ENCODE measurements at regions of chr12 and their contacts with region 1.

Region 1: DNA sequence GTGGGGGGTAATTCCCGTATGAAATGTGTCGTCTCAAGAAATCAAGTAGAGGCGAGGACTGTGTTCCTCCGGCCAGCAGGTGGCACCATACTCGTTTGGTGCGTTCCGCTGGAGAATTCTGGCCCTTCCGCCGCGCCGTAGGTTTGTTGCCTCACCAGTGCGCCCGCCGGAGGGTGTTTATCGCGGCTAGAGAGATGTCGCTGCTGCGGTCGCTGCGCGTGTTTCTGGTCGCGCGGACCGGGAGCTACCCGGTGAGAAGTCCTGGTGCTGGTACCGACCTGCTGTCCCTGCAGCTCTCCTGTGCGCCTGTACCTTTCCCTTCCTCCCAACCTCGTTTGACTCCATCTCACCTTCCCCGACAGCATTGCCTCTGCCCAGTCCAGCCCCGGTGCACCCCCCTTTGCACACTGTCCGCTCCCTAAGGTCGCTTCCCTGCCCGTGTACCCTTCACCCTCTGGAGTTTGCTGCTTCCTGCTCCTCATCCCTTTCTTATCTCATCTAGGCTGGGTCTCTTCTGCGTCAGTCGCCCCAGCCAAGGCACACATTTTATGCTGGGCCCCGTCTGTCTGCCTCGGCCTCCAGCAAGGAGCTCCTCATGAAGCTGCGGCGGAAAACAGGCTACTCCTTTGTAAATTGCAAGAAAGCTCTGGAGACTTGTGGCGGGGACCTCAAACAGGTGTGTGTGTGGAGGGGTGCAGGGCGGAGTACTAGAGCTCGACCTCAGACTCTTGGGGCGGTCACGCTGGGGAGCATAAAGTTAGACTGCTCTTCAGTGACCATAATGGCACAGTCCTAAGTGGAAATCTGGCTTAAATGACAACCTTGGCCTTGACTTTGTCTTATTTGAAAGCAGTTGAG is at the start of gene TSFM:
- DNase-seq: peak; percentile 93 to 99 (median 98)
- ATAC-seq: peak; percentile 93
- H3K4me3 ChIP-seq: peak within 1 kb of the TSS; percentile 89
- H3K4me3 Mint-ChIP-seq: peak within 1 kb of the TSS; percentile 100
- H3K27ac ChIP-seq: peak within 1 kb of the TSS; percentile 51 to 78
- H3K27ac Mint-ChIP-seq: peak within 1 kb of the TSS; percentile 100
- H3K4me1 ChIP-seq: peaks cover 58% of the 10 kb centered on the region
- H3K4me1 Mint-ChIP-seq: peaks cover 47% of the 10 kb centered on the region
- H3K27me3 ChIP-seq: no peaks in the 10 kb centered on the region
- H3K27me3 Mint-ChIP-seq: no peaks in the 10 kb centered on the region
- CTCF ChIP-seq: peak; percentile 90
- total RNA-seq, gene TSFM: 25.8 to 26.9 TPM

Region 2: DNA sequence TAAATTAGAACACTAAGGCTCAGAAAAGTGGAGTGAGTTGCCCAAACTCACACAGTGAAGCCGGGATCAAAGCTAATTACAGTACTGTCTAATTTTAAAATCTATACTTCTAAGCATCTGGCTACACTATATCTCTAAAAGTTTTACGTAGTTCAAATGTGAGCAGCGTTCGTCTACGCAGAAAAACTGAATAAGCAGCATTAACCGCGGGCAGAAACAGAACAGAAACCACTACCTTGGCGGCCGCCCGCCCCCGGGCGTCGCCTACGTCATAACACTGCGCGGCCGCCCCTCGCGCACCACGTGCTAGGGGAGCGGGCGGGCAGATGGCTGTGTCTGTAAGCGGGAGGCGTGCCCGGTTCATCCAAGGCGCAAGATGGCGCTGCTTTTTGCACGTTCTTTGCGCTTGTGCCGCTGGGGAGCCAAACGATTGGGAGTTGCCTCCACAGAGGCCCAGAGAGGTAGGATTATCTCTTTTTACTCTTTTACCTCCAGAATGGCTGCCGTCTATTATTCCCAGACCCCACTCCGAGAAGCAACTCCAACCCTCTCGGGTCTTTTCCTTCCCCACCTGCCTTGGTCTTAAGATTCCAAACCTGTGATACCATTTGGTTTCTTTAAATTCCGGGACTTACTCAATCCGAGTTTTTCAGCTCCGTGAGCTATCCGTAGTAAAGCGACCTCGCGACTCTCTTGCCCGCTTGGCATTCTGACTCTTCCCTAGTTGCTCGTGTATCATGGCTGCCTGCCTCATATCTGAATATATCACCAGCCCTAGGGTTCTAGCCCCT is 1314.4 kb before region 1 on chr12 and contains the start of gene SPRYD4:
- CTCF ChIA-PET with region 1: no interaction called
- POLR2A ChIA-PET with region 1: no interaction called
- intact Hi-C with region 1: no loop called
- DNase-seq: peak; percentile 88 to 98 (median 93)
- ATAC-seq: peak; percentile 90
- H3K4me3 ChIP-seq: peak within 1 kb of the TSS; percentile 87
- H3K4me3 Mint-ChIP-seq: peak within 1 kb of the TSS; percentile 96
- H3K27ac ChIP-seq: peak within 1 kb of the TSS; percentile 68 to 94
- H3K27ac Mint-ChIP-seq: peak within 1 kb of the TSS; percentile 97
- H3K4me1 ChIP-seq: peaks cover 29% of the 10 kb centered on the region
- H3K4me1 Mint-ChIP-seq: peaks cover 31% of the 10 kb centered on the region
- H3K27me3 ChIP-seq: no peaks in the 10 kb centered on the region
- H3K27me3 Mint-ChIP-seq: no peaks in the 10 kb centered on the region
- CTCF ChIP-seq: peak; percentile 34
- total RNA-seq, gene SPRYD4: 7.4 to 7.9 TPM

Region 3: GRCh38 chr12:57708296-57708695 is 74.5 kb before region 1 on chr12:
- CTCF ChIA-PET with region 1: no interaction called
- POLR2A ChIA-PET with region 1: no interaction called
- intact Hi-C with region 1: no loop called
- DNase-seq: no peak
- ATAC-seq: no peak
- H3K4me3 ChIP-seq: no peak overlapping the region
- H3K4me3 Mint-ChIP-seq: no peak overlapping the region
- H3K27ac ChIP-seq: no peak overlapping the region
- H3K27ac Mint-ChIP-seq: no peak overlapping the region
- H3K4me1 ChIP-seq: no peaks in the 10 kb centered on the region
- H3K4me1 Mint-ChIP-seq: peaks cover 5% of the 10 kb centered on the region
- H3K27me3 ChIP-seq: no peaks in the 10 kb centered on the region
- H3K27me3 Mint-ChIP-seq: no peaks in the 10 kb centered on the region
- CTCF ChIP-seq: no peak

Region 4: GRCh38 chr12:57765042-57765697 is 17.7 kb before region 1 on chr12:
- CTCF ChIA-PET with region 1: interaction called, 5 read pairs
- POLR2A ChIA-PET with region 1: interaction called, 11 read pairs
- intact Hi-C with region 1: no loop called
- DNase-seq: peak in 12 of 14 experiments; percentile 38 to 74 (median 54)
- ATAC-seq: peak; percentile 71
- H3K4me3 ChIP-seq: peak overlapping the region; percentile 60
- H3K4me3 Mint-ChIP-seq: peak overlapping the region; percentile 86
- H3K27ac ChIP-seq: no peak overlapping the region
- H3K27ac Mint-ChIP-seq: no peak overlapping the region
- H3K4me1 ChIP-seq: peaks cover 30% of the 10 kb centered on the region
- H3K4me1 Mint-ChIP-seq: peaks cover 38% of the 10 kb centered on the region
- H3K27me3 ChIP-seq: peaks cover 27 to 31% of the 10 kb centered on the region in 2 experiments
- H3K27me3 Mint-ChIP-seq: peaks cover 35% of the 10 kb centered on the region
- CTCF ChIP-seq: peak; percentile 59

Region 5: GRCh38 chr12:57771708-57772428 is 11.0 kb before region 1 on chr12 and contains the start of gene METTL1:
- CTCF ChIA-PET with region 1: interaction called, 5 read pairs
- POLR2A ChIA-PET with region 1: interaction called, 15 read pairs
- intact Hi-C with region 1: loop called in 1 of 2 experiments (anchors 1 kb)
- DNase-seq: peak; percentile 73 to 95 (median 83)
- ATAC-seq: peak; percentile 90
- H3K4me3 ChIP-seq: peak within 1 kb of the TSS; percentile 63
- H3K4me3 Mint-ChIP-seq: peak within 1 kb of the TSS; percentile 94
- H3K27ac ChIP-seq: peak within 1 kb of the TSS; percentile 79 to 85
- H3K27ac Mint-ChIP-seq: peak within 1 kb of the TSS; percentile 93
- H3K4me1 ChIP-seq: peaks cover 30% of the 10 kb centered on the region
- H3K4me1 Mint-ChIP-seq: peaks cover 16% of the 10 kb centered on the region
- H3K27me3 ChIP-seq: peaks cover under 1 to 9% of the 10 kb centered on the region in 2 experiments
- H3K27me3 Mint-ChIP-seq: no peaks in the 10 kb centered on the region
- CTCF ChIP-seq: no peak
- total RNA-seq, gene METTL1: 9.3 to 12.0 TPM

Region 6: DNA sequence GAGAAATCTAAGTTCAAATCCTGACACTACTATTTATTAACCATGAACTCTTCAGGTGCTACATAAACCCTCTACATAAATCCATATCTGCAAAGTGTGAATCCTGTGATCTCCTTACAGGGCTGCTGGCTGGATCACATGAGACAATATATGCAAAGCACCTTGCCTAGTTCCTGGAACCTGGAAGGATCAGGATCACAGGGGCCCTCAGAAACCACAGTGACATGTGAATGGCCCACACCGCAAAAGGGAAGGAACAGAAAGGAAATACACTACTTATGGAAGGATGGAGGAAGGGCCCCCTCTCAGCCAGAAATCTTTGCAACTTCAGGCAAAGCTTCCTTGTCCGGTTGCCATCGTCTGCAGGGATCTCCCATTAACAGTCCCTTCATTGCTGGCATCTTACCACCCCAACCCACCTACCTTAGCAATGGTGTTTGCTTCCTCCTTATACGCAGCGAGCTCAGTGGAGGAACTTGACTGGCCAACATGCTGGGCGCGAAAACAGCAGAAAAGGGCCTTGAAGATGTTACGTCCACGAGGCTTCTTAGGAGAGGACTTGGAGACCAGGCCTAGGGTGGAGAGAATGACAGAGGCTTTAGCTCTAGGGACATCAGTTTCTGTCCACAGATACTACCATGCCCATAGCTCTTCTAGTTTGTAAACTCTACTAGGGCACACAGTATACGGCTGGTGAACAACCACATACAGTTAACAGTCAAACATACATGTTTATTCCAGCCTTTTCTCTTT is 46.4 kb after region 1 on chr12:
- CTCF ChIA-PET with region 1: no interaction called
- POLR2A ChIA-PET with region 1: no interaction called
- intact Hi-C with region 1: no loop called
- DNase-seq: no peak
- ATAC-seq: no peak
- H3K4me3 ChIP-seq: no peak overlapping the region
- H3K4me3 Mint-ChIP-seq: no peak overlapping the region
- H3K27ac ChIP-seq: no peak overlapping the region
- H3K27ac Mint-ChIP-seq: peak overlapping the region; percentile 92
- H3K4me1 ChIP-seq: peaks cover 64% of the 10 kb centered on the region
- H3K4me1 Mint-ChIP-seq: peaks cover 51% of the 10 kb centered on the region
- H3K27me3 ChIP-seq: no peaks in the 10 kb centered on the region
- H3K27me3 Mint-ChIP-seq: no peaks in the 10 kb centered on the region
- CTCF ChIP-seq: no peak

Region 7: DNA sequence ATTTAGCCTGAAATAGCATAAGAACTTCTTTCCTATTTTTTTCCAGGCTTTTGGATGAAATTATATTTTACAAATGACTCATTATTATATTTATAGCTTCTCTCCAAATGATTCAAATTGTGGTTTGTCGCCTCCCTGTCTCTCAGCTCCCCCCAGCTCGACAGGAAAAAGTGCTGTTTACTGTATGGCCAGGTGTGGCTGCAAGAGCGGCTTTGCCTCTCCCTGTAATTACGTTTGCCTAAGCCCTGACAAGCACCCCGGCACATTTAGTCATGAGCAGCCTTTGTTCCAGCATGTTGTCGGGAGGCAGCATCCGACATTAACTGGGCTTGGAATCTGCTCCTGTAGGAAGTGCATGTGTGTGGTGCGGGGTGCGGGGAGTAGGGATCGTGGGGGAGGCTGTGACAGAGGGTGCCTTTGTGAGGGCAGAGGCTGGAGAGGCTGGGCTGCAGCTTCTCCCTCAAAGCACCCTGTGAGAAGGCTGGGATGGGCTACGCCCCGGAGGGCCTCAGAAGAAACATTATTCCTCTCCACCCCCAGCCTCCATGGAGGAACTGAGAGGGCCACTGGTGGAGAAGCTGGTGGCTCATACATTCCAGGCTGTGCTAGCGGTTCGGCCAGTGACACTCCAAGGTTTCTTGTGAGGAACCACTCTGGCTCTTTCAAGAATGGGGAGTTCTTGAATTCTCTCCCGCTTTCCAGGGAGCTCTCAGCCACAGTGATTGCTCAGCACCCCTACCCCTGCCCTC is 105.7 kb after region 1 on chr12:
- CTCF ChIA-PET with region 1: no interaction called
- POLR2A ChIA-PET with region 1: no interaction called
- intact Hi-C with region 1: no loop called
- DNase-seq: peak in 11 of 14 experiments; percentile 12 to 63 (median 41)
- ATAC-seq: peak; percentile 95
- H3K4me3 ChIP-seq: no peak overlapping the region
- H3K4me3 Mint-ChIP-seq: no peak overlapping the region
- H3K27ac ChIP-seq: no peak overlapping the region
- H3K27ac Mint-ChIP-seq: peak overlapping the region; percentile 68
- H3K4me1 ChIP-seq: peaks cover 26% of the 10 kb centered on the region
- H3K4me1 Mint-ChIP-seq: peaks cover 13% of the 10 kb centered on the region
- H3K27me3 ChIP-seq: peaks cover 0 to 4% of the 10 kb centered on the region in 2 experiments
- H3K27me3 Mint-ChIP-seq: no peaks in the 10 kb centered on the region
- CTCF ChIP-seq: no peak